ENCODE measurements at regions of chr5 and their contacts with region 1.

Region 1: GRCh38 chr5:151115274-151115905 is 34.6 kb upstream of the TNIP1 start:
- DNase-seq: peak; percentile 69
- CTCF ChIP-seq: peak; percentile 93

Region 2: GRCh38 chr5:149782018-149782894 is 1333.1 kb before region 1 on chr5:
- CTCF ChIA-PET with region 1: no interaction called
- POLR2A ChIA-PET with region 1: no interaction called
- DNase-seq: no peak
- CTCF ChIP-seq: no peak

Region 3: GRCh38 chr5:150626853-150627276 is 488.5 kb before region 1 on chr5:
- CTCF ChIA-PET with region 1: no interaction called
- POLR2A ChIA-PET with region 1: no interaction called
- DNase-seq: no peak
- CTCF ChIP-seq: no peak

Region 4: GRCh38 chr5:150801117-150801927 is 314.1 kb before region 1 on chr5:
- CTCF ChIA-PET with region 1: interaction called, 14 read pairs
- POLR2A ChIA-PET with region 1: no interaction called
- DNase-seq: peak; percentile 41
- CTCF ChIP-seq: peak; percentile 53

Region 5: DNA sequence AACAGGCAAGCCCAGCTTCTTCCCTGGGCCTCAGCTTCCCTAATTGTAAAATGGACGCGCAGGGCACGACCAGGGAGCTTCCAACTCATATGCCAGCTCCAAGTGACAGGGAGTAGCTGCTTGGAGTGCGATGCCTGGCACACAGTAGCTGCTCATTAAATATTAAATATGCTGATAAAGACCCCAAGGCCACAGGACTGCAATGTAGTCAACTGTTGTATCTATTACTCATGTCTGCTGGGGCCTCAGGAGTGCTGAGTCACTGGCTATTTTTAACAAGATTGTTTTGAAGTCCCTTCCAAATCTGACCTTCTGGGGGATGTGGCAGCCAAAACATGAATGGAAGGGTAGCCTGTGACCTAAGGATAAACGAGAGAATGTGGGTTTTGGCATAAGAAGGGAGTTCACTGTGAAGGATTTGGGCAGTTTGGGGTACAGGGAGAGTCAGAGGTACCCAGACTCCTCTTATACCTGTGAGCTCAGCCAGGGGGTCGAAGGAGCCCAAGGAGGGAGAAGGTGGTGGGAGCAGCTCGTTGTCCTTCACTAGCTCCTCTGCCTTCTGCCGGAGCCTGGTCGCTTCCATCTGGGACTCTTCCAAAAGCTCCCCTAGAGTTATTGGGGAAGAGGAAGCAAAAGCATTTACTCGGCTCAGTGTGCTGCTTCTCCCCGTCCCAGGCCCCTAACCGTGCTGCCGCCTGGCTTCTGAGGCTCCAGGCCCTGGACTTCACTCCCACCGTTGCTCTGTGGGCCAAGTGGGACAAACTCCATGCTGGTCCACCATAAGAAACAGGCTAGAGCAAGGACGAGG is 52.0 kb before region 1 on chr5:
- CTCF ChIA-PET with region 1: interaction called, 45 read pairs
- POLR2A ChIA-PET with region 1: no interaction called
- DNase-seq: no peak
- CTCF ChIP-seq: no peak

Region 6: GRCh38 chr5:151080623-151081430 is 34.6 kb before region 1 on chr5 and contains the start of gene TNIP1:
- CTCF ChIA-PET with region 1: interaction called, 29 read pairs
- POLR2A ChIA-PET with region 1: interaction called, 3 read pairs
- DNase-seq: peak; percentile 97
- CTCF ChIP-seq: no peak

Region 7: GRCh38 chr5:151104795-151105194 is 10.6 kb before region 1 on chr5:
- CTCF ChIA-PET with region 1: interaction called, 92 read pairs
- POLR2A ChIA-PET with region 1: interaction called, 3 read pairs
- DNase-seq: no peak
- CTCF ChIP-seq: no peak

Region 8: GRCh38 chr5:151141535-151141934 is 26.1 kb after region 1 on chr5:
- CTCF ChIA-PET with region 1: interaction called, 67 read pairs
- POLR2A ChIA-PET with region 1: interaction called, 4 read pairs
- DNase-seq: peak; percentile 84
- CTCF ChIP-seq: no peak

Region 9: DNA sequence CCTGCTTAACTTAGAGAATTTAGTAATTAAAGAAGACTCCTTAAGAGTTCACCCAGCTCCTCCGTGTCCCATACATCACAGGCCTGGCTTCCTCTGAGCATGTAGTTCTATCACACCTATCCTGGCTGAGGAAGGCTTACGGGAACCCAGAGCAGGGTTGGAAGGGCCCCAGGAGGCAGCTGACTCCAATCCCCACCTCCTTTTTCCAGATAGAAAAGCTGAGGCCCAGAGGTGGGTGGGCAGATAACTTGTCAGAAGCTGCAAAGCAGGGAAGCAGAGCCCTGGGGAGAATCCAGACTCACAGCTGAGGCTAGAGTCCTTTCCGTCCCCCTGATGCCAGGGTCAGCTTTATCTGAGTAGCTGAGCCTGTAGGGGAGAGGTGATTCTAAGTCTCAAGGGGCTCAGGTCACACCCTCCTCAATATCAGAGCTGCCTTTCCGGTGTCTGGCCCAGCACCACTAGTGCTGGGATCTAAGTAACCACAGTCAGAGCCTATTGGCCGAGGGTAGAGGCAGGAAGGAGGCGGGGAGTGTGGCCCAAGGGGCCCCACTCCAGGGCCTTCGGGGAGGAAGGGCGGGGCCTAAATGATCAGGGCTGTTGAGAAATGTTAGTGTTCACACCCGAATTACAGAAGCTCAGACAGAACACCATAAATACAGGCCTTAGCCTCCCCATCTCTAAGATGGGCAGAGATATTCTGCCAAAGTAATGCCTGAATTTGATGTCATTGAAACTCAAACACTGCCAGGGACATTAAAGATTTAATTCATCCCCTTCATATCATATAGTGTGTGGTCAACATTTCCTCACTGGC is 98.6 kb after region 1 on chr5:
- CTCF ChIA-PET with region 1: interaction called, 10 read pairs
- POLR2A ChIA-PET with region 1: no interaction called
- DNase-seq: peak; percentile 90
- CTCF ChIP-seq: no peak